ENCODE measurements at regions of chr2 and their contacts with region 1.

Region 1: DNA sequence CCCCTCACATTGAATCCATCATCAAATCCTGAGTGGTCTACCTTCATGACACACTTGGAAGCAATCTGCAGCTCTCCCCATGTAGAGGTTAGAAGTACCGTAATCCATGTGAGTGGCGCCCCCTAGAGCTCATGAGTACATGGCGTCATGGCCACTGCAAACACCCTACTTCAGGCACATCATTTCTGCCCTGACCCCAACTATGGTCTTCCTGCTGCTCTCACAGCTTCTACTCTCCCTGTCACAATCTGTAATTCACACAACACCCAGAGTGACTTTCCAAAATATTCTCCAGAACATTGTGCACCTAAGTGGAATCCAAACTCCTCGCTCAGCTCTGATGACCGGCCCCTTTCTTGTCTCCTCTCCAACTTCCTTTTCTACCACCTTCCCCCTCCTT is 141.9 kb downstream of the ANKRD44 start:
- DNase-seq: peak; percentile 87
- ATAC-seq: peak; percentile 83
- H3K4me3 Mint-ChIP-seq: no peak overlapping the region
- H3K27ac Mint-ChIP-seq: peak overlapping the region; percentile 82
- H3K4me1 Mint-ChIP-seq: peaks cover 69% of the 10 kb centered on the region
- H3K27me3 Mint-ChIP-seq: no peaks in the 10 kb centered on the region

Region 2: GRCh38 chr2:197124639-197125390 is 43.9 kb before region 1 on chr2:
- CTCF ChIA-PET with region 1: interaction called, 17 read pairs
- POLR2A ChIA-PET with region 1: no interaction called
- intact Hi-C with region 1: no loop called
- DNase-seq: no peak
- ATAC-seq: no peak
- H3K4me3 Mint-ChIP-seq: no peak overlapping the region
- H3K27ac Mint-ChIP-seq: no peak overlapping the region
- H3K4me1 Mint-ChIP-seq: peaks cover 53% of the 10 kb centered on the region
- H3K27me3 Mint-ChIP-seq: no peaks in the 10 kb centered on the region

Region 3: GRCh38 chr2:197145471-197146138 is 23.1 kb before region 1 on chr2:
- CTCF ChIA-PET with region 1: interaction called, 12 read pairs
- POLR2A ChIA-PET with region 1: no interaction called
- intact Hi-C with region 1: no loop called
- DNase-seq: no peak
- ATAC-seq: peak; percentile 81
- H3K4me3 Mint-ChIP-seq: no peak overlapping the region
- H3K27ac Mint-ChIP-seq: peak overlapping the region; percentile 88
- H3K4me1 Mint-ChIP-seq: peaks cover 75% of the 10 kb centered on the region
- H3K27me3 Mint-ChIP-seq: no peaks in the 10 kb centered on the region

Region 4: GRCh38 chr2:197179744-197180498 is 11.2 kb after region 1 on chr2:
- CTCF ChIA-PET with region 1: interaction called, 24 read pairs
- POLR2A ChIA-PET with region 1: no interaction called
- intact Hi-C with region 1: no loop called
- DNase-seq: no peak
- ATAC-seq: no peak
- H3K4me3 Mint-ChIP-seq: no peak overlapping the region
- H3K27ac Mint-ChIP-seq: peak overlapping the region; percentile 6
- H3K4me1 Mint-ChIP-seq: peaks cover 69% of the 10 kb centered on the region
- H3K27me3 Mint-ChIP-seq: no peaks in the 10 kb centered on the region

Region 5: GRCh38 chr2:197383823-197384222 is 215.1 kb after region 1 on chr2:
- CTCF ChIA-PET with region 1: interaction called, 10 read pairs
- POLR2A ChIA-PET with region 1: no interaction called
- intact Hi-C with region 1: no loop called
- DNase-seq: no peak
- ATAC-seq: no peak
- H3K4me3 Mint-ChIP-seq: no peak overlapping the region
- H3K27ac Mint-ChIP-seq: no peak overlapping the region
- H3K4me1 Mint-ChIP-seq: peaks cover 8% of the 10 kb centered on the region
- H3K27me3 Mint-ChIP-seq: no peaks in the 10 kb centered on the region